ENCODE measurements at regions of chr16 and their contacts with region 1.

Region 1: GRCh38 chr16:89641458-89642119 is 15.9 kb downstream of the CHMP1A start:
- DNase-seq: no peak
- H3K4me3 ChIP-seq: 0 out of 4 replicates have a peak overlapping the region, but pooled peaks of 1 of the 2 experiments have one; percentile 22
- H3K27ac ChIP-seq: no peak overlapping the region
- H3K4me1 ChIP-seq: peaks cover 0 to 5% of the 10 kb centered on the region in 2 experiments; a peak in 1 of 4 replicates
- H3K27me3 ChIP-seq: no peaks in the 10 kb centered on the region
- CTCF ChIP-seq: no peak
- EP300 ChIP-seq: no peak
- RAD21 ChIP-seq: no peak

Region 2: GRCh38 chr16:89565506-89566372 is 75.8 kb before region 1 on chr16:
- CTCF ChIA-PET with region 1: interaction called, 20 read pairs
- POLR2A ChIA-PET with region 1: no interaction called
- DNase-seq: peak; percentile 84
- H3K4me3 ChIP-seq: no peak overlapping the region; a peak in 1 of 4 replicates
- H3K27ac ChIP-seq: peak overlapping the region in 1 of 2 experiments; percentile 43; a peak in 3 of 4 replicates
- H3K4me1 ChIP-seq: peaks cover 19 to 44% of the 10 kb centered on the region in 2 experiments; a peak in 3 of 4 replicates
- H3K27me3 ChIP-seq: no peaks in the 10 kb centered on the region
- CTCF ChIP-seq: peak; percentile 76
- EP300 ChIP-seq: no peak
- RAD21 ChIP-seq: peak; percentile 16; the same call in 1 of the 2 replicates

Region 3: GRCh38 chr16:89588413-89589109 is 53.0 kb before region 1 on chr16:
- CTCF ChIA-PET with region 1: no interaction called
- POLR2A ChIA-PET with region 1: no interaction called
- DNase-seq: no peak
- H3K4me3 ChIP-seq: no peak overlapping the region
- H3K27ac ChIP-seq: no peak overlapping the region
- H3K4me1 ChIP-seq: no peaks in the 10 kb centered on the region; a peak in 1 of 4 replicates
- H3K27me3 ChIP-seq: no peaks in the 10 kb centered on the region
- CTCF ChIP-seq: no peak
- EP300 ChIP-seq: no peak
- RAD21 ChIP-seq: no peak

Region 4: GRCh38 chr16:89599451-89599858 is 42.1 kb before region 1 on chr16:
- CTCF ChIA-PET with region 1: interaction called, 10 read pairs
- POLR2A ChIA-PET with region 1: no interaction called
- DNase-seq: peak; percentile 65
- H3K4me3 ChIP-seq: no peak overlapping the region
- H3K27ac ChIP-seq: no peak overlapping the region
- H3K4me1 ChIP-seq: peaks cover 13 to 14% of the 10 kb centered on the region in 2 experiments; a peak in 3 of 4 replicates
- H3K27me3 ChIP-seq: no peaks in the 10 kb centered on the region
- CTCF ChIP-seq: peak; percentile 55
- EP300 ChIP-seq: no peak
- RAD21 ChIP-seq: peak; percentile 38

Measured in SK-N-SH (cell line).